Heart right ventricle (tissue), 16 donors: ENCODE measurements at regions of chr6 and their contacts with region 1.

Region 1: DNA sequence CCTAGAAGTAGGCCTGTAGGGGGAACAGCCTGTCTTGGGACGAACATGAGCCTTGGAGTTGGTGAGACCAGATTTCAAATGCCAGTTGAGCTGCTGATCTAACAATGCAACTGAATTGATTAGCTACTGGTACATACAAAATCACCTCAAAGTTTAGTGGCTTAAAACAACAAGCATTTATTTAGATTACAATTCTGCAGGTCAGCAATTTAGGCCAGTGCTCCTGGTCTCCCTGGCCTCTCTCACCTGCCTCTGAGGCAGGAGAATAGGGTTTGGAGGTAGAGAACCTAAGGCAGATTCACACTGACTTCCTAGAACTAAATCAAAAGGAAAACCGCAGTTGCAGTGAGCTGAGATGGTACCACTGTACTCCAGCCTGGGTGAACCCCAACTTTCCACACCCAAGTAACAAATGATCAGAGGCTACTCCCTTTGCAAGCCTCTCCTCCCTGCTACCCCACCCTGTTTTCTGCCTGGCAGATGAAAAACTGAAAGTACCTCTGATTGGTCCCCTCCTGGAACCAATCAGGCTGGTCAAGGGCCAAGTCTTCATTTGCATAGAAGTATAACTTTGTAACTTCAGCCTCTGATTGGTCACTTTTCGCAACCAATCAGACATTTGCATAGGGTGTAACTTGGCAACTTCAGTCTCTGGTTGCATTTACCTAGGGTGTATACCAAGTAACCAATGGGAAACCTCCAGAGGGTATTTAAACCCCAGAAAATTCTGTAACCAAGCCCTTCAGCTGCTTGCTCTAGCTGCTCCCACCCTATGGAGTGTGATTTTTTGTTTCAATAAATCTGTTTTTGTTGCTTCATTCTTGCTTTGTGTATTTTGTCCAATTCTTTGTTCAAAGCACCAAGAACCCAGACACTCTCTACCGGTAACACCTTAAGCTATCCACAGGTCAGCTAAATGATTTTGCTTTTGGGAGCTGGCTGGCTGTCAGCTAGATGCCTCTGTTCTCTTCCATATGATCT is 8.1 kb upstream of the UBR2 start:
- DNase-seq: no peak
- ATAC-seq: no peak
- H3K4me3 ChIP-seq: no peak overlapping the region
- H3K27ac ChIP-seq: no peak overlapping the region
- H3K4me1 ChIP-seq: peaks cover 0 to 9% (median 0%) of the 10 kb centered on the region in 9 donors
- H3K27me3 ChIP-seq: peaks cover 0 to 4% (median 0%) of the 10 kb centered on the region in 7 donors
- CTCF ChIP-seq: no peak

Region 2: DNA sequence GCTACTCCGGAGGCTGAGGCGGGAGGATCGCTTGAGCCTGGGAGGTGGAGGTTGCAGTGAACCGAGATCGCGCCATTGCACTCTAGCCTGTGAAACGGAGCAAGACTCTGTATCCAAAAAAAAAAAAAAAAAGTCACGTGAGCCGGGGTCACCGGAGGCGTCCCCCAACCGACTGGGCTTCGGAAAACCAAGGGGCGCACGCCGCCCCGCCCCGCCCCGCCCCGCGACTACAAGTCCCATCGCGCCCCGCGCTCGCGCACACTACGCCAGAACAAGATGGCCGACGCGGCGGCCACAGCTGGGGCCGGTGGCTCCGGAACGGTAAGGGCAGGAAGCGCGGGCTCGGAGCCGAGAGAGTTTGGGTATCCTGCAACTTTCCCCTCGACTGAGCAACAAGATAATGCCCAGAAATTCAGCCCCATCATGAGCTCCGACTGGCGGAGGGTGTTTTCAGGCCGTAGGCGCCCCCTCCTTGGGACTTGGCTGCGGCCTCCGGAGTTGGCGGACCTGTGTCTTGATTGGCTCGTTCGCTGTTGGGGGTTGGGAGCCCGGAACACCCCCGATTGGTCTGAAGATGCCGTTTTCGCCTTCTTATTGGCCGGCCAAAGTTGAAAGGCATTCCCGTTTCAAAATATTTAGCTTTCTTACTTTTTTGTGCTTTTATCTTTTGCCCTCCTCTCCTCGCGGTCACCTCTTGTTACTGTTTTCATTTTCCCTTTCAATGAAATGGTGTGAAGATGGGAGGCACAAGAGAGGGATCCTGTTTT is 505.3 kb before region 1 on chr6 and contains the start of gene TAF8:
- intact Hi-C with region 1: loop called in 1 of 10 experiments (anchors 10 kb)
- DNase-seq: peak; percentile 91 to 94
- ATAC-seq: peak; percentile 83 to 91 (median 90)
- H3K4me3 ChIP-seq: peak within 1 kb of the TSS; percentile 29 to 88 (median 76)
- H3K27ac ChIP-seq: peak within 1 kb of the TSS; percentile 85 to 98 (median 94)
- H3K4me1 ChIP-seq: peaks cover 14 to 75% (median 62%) of the 10 kb centered on the region in 9 donors
- H3K27me3 ChIP-seq: no peaks in the 10 kb centered on the region
- CTCF ChIP-seq: no peak
- total RNA-seq, gene TAF8: 21.0 to 38.1 (median 31.6) TPM

Region 3: DNA sequence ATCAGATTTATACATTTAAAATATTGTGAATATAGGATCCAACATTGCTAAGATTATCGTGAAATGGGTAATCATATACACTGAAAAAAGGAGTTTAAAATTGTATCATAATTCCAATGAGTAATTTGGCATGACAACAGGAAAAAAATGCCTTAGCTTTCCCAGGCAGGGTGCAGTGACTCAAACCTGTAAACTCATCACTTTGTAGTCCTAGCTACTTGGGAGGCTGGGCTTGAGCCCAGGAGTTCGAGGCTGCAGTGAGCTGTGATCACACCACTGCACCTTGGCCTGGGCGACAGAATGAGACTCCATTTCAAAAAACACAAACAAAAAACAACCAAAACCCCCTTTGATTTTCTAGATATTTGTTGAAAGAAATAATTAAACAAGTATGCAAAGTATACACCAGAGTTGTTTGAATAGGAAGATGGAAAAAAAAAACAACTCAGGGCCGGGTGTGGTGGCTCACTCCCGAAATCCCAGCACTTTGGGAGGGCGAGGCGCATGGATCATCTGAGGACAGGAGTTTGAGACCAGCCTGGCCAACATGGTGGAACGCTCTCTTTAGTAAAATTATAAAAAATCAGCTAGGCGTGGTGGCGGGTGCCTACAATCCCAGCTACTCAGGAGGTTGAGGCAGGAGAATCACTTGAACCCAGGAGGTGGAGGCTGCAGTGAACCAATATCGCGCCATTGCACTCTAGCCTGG is 202.8 kb before region 1 on chr6:
- intact Hi-C with region 1: no loop called
- DNase-seq: no peak
- ATAC-seq: no peak
- H3K4me3 ChIP-seq: no peak overlapping the region
- H3K27ac ChIP-seq: no peak overlapping the region
- H3K4me1 ChIP-seq: no peaks in the 10 kb centered on the region
- H3K27me3 ChIP-seq: no peaks in the 10 kb centered on the region
- CTCF ChIP-seq: no peak

Region 4: DNA sequence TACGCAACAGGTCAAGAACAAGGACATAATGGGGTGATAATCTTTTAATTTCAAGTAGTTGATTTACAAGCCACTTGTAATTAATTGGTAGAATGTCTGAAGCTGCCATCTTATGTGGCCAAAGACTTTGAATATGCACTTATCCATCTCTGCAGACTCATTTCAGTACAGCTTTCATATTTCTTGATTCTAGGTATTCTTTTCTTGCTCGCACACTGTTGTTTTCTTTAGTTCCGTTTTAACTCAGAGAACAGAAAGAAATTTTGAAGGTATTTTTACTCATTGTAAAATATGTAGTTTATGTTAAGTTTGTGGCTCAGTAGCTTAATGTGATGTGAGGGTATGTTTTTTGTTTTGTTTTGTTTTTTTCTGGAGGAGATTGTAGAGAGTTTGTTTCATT is 81.9 kb after region 1 on chr6:
- intact Hi-C with region 1: no loop called
- DNase-seq: no peak
- ATAC-seq: no peak
- H3K4me3 ChIP-seq: no peak overlapping the region
- H3K27ac ChIP-seq: no peak overlapping the region
- H3K4me1 ChIP-seq: no peaks in the 10 kb centered on the region
- H3K27me3 ChIP-seq: no peaks in the 10 kb centered on the region
- CTCF ChIP-seq: no peak

Region 5: GRCh38 chr6:42745707-42746462 is 190.1 kb after region 1 on chr6 and contains the start of gene TBCC:
- intact Hi-C with region 1: no loop called
- DNase-seq: peak; percentile 93 to 97
- ATAC-seq: peak; percentile 92 to 97 (median 94)
- H3K4me3 ChIP-seq: peak within 1 kb of the TSS; percentile 68 to 99 (median 96)
- H3K27ac ChIP-seq: peak within 1 kb of the TSS; percentile 84 to 98 (median 95)
- H3K4me1 ChIP-seq: peaks cover 5 to 38% (median 32%) of the 10 kb centered on the region in 9 donors
- H3K27me3 ChIP-seq: no peaks in the 10 kb centered on the region
- CTCF ChIP-seq: no peak
- total RNA-seq, gene TBCC: 9.8 to 16.1 (median 13.3) TPM